ENCODE measurements at regions of chr22 and their contacts with region 1.

Region 1: DNA sequence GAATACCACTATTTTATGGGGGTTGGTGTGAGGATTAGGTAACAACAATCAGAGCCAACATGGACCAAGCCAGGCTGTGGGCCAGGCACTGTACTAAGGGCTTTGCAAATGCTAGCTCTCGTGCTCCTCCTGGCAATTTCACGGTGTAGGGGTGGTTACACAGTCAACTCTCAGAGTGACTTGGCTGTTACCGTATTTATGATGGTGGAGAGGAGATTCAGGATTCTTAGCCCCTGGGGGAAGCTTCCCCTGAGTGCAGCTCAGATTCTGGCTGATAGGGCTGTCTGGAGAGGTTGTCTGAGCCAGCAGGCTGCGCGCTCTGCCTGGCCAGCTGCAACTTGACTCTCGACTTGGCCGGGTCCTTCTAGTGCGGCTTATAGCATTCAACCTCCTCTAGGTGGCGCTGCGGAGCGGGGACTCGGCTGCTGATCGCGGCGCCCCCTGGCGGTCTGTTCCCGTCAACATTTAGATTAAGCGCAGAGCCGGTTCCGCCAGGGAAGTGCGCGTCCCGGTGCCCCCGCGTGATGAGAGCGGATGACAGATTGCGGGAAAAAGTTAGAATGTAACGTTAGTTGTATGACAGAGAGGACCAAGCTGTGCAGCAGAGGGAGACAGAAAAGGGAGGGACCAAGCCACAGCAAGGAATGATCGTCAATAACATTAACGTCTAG is 4.5 kb upstream of the NCF4 start:
- DNase-seq: no peak
- H3K4me3 ChIP-seq: no peak overlapping the region; the same call in 1 of the 2 replicates
- CTCF ChIP-seq: peak; percentile 100

Region 2: GRCh38 chr22:36546092-36546804 is 310.0 kb before region 1 on chr22:
- CTCF ChIA-PET with region 1: interaction called, 153 read pairs
- POLR2A ChIA-PET with region 1: no interaction called
- DNase-seq: no peak
- H3K4me3 ChIP-seq: no peak overlapping the region
- CTCF ChIP-seq: peak; percentile 67

Region 3: GRCh38 chr22:36659762-36660509 is 196.3 kb before region 1 on chr22:
- CTCF ChIA-PET with region 1: no interaction called
- POLR2A ChIA-PET with region 1: no interaction called
- DNase-seq: peak; percentile 59
- H3K4me3 ChIP-seq: no peak overlapping the region
- CTCF ChIP-seq: no peak

Region 4: DNA sequence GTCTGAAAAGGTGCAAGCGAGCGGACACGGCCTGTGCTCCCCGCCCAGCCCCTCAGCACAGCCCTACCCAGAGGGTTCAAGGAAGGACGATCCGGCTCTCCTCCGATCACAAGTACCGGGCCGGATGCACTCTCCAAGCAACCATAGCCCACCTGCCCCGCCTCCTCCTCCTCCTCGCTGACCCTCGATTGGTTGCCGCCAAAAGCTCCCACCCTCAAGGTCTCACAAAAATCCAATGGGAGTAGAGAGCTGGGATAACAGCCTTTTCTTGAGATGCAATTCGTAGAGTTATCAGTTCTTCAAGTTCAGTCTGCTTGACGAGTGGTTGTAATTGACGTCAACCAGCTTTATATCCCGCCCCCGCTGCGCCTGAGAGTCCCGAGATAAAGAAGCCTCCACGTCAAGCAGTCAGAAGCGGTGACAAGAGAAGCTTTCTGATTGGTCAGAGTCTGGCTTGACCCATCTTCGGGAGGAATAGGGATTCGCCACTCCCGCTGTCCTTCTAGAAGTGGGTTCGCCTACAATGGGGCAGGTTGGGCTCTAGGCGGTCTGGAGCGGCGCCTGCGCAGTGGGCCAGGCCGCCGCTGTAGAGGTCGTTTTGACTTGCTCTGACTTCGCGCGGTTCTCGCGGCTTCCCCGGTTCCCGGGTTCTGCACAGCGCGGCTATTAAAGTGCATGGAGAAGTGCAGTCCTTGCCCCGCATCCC is 80.1 kb before region 1 on chr22 and contains the start of gene IFT27:
- CTCF ChIA-PET with region 1: interaction called, 181 read pairs
- POLR2A ChIA-PET with region 1: no interaction called
- DNase-seq: peak; percentile 100
- H3K4me3 ChIP-seq: peak within 1 kb of the TSS; percentile 88
- CTCF ChIP-seq: no peak

Region 5: DNA sequence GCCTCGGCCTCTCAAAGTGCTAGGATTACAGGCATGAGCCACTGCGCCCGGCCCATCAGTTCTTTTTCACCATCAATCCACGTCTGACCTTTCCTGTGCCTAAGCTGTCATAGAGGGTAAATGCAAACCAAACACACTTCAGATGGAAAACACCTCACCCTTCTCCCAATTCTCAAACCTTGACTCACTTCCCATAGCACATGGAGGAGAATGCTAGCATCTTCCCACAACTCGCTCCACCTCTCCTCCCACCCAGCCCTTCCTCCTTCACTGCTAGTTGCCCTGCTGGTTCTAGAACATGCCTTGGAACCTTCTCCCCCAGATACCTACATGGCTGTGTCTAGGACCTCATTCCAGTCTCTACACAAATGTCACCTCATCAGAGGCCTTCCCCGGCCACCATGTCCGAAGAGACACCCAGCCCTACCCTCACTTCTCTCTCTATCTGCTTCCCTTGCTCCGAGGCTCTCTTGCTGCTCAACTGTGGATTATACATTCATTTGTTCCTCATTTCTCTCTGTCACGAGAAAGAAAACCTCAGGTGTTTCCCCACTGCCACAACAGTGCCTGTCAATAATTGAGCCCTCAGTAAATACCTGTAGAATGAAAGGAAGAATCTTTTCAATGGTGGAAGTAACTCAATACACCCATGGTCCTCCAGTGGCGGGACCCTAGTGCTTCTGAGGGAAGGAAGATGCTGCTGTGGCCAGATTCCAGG is 16.7 kb before region 1 on chr22:
- CTCF ChIA-PET with region 1: interaction called, 87 read pairs
- POLR2A ChIA-PET with region 1: no interaction called
- DNase-seq: no peak
- H3K4me3 ChIP-seq: no peak overlapping the region
- CTCF ChIP-seq: no peak

Region 6: DNA sequence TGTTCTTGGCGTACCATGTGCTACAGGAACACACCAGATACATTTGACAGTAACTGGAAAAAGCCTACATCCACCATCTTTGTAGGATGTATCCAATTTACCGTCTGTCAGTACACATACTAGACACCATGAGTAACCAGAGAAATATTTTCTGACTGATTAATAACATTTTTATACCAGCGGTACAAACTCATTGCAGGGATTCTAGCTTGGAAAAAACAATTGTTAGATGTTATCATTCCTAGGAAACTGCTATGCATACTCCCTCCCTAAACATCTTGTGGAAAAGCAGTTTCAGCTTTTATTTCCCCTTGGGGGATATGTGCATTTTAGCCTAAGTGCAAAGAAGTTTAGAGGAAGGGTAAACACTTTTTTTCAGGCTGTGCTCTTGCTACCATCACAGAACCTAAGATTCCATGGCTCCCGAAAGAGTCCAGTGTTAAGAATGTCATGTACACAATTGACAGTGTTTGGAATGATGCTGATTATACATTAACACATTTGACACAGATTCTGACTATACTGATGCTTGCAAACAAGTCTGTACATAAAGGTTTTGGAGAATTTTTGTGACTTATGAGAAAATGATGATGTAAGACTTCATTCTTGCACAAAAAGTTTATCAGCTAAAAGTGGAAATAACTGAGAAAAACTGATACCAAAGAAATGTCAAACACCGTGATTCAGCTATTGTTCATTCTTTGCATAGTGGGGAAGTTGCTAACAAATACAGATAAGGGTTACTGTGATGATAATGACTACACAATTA is 28.3 kb after region 1 on chr22:
- CTCF ChIA-PET with region 1: interaction called, 64 read pairs
- POLR2A ChIA-PET with region 1: no interaction called
- DNase-seq: no peak
- H3K4me3 ChIP-seq: no peak overlapping the region
- CTCF ChIP-seq: no peak

Region 7: GRCh38 chr22:36897611-36898010 is 41.4 kb after region 1 on chr22:
- CTCF ChIA-PET with region 1: interaction called, 23 read pairs
- POLR2A ChIA-PET with region 1: no interaction called
- DNase-seq: no peak
- H3K4me3 ChIP-seq: no peak overlapping the region
- CTCF ChIP-seq: no peak

Region 8: DNA sequence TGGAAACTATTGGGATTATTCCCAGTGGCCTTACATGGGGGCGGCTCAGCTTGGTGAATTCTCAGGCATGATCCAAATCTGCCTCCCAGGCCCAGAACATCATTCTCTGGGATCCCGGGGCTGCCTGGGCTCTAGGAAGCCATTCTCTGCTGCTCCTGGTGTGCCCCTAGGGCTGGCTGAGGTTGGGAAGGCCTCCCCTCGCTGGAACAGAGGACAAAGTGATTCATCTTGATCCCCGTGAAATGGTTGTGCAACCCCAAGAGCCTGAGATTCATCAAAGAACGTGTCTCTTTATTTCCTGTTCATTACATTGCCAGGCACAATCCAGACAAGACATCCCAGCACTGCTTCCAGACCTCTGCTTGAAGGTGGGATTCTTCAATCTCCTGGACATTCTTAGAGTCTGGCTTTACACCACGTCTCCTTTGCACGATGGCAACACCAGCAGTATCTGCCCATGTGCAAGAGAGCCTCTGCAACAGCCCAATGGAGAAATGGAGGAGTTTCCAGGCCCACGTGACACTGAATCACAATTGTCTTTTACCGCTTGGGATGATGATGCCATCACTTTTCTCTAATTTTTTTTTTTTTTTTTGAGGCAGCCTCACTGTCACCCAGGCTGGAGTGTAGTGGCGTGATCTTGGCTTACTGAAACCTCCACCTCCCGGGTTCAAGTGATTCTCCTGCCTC is 110.7 kb after region 1 on chr22:
- CTCF ChIA-PET with region 1: interaction called, 14 read pairs
- POLR2A ChIA-PET with region 1: no interaction called
- DNase-seq: no peak
- H3K4me3 ChIP-seq: no peak overlapping the region
- CTCF ChIP-seq: no peak